A549 (cell line): ENCODE measurements at regions of chr15 and their contacts with region 1.

Region 1: GRCh38 chr15:88274553-88275460 is 18.3 kb upstream of the NTRK3 start:
- DNase-seq: peak; percentile 69 to 91
- ATAC-seq: peak; percentile 82 to 96
- H3K4me3 ChIP-seq: no peak overlapping the region
- H3K27ac ChIP-seq: peak overlapping the region; percentile 18 to 58; a peak in 4 of 6 replicates
- H3K4me1 ChIP-seq: peaks cover 10% of the 10 kb centered on the region; the same call in 2 of the 3 replicates
- CTCF ChIP-seq: peak; percentile 94
- EP300 ChIP-seq: no peak
- POLR2A ChIP-seq: no peak
- RAD21 ChIP-seq: peak; percentile 88 to 90

Region 2: DNA sequence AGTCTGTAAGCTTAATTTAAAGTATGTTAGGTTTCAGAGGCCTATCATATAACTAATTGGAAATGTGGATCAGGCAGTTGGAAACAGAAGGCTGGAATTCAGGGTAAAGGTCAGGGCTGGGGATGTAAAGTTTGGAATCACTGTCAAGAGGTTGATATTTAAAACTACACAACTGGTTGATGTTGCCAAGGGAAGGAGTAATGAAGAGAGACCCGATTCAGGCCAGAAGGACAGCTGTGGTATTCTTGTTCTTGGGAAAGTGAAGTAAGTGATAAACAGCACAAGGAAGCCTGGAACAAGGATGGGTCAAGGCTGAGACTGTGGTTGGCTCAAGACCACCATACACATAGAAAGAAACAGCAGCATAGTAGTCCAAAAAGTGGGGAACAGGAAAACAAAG is 672.4 kb before region 1 on chr15:
- CTCF ChIA-PET with region 1: no interaction called
- POLR2A ChIA-PET with region 1: no interaction called
- DNase-seq: no peak
- ATAC-seq: no peak
- H3K4me3 ChIP-seq: no peak overlapping the region
- H3K27ac ChIP-seq: no peak overlapping the region
- H3K4me1 ChIP-seq: no peaks in the 10 kb centered on the region
- CTCF ChIP-seq: no peak
- EP300 ChIP-seq: no peak
- POLR2A ChIP-seq: no peak
- RAD21 ChIP-seq: no peak

Region 3: GRCh38 chr15:87874896-87875711 is 399.7 kb before region 1 on chr15:
- CTCF ChIA-PET with region 1: no interaction called
- POLR2A ChIA-PET with region 1: no interaction called
- DNase-seq: no peak
- ATAC-seq: no peak
- H3K4me3 ChIP-seq: no peak overlapping the region
- H3K27ac ChIP-seq: peak overlapping the region in 1 of 2 experiments; percentile 8; a peak in 1 of 6 replicates
- H3K4me1 ChIP-seq: peaks cover 21% of the 10 kb centered on the region; the same call in 2 of the 3 replicates
- CTCF ChIP-seq: no peak
- EP300 ChIP-seq: no peak
- POLR2A ChIP-seq: no peak
- RAD21 ChIP-seq: no peak

Region 4: DNA sequence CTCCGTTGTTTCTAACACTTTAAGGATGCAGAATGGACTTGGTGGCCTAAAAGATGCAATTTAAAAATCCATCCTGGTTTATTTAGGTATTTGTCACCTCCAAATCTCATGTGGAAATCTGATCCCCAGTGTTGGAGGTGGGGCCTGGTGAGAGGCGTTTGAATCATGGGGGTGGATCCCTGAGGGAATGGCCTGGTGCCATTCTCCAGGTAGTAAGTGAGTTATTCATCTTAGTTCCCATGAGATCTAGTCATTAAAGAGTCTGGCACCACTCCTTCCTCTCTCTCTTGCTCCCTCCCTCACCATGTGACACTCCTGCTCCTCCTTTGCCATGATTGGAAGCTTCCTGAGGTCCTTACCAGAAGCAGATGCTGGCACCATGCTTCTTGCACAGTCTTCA is 357.3 kb before region 1 on chr15:
- CTCF ChIA-PET with region 1: no interaction called
- POLR2A ChIA-PET with region 1: no interaction called
- DNase-seq: no peak
- ATAC-seq: no peak
- H3K4me3 ChIP-seq: no peak overlapping the region
- H3K27ac ChIP-seq: no peak overlapping the region
- H3K4me1 ChIP-seq: no peaks in the 10 kb centered on the region
- CTCF ChIP-seq: no peak
- EP300 ChIP-seq: no peak
- POLR2A ChIP-seq: no peak
- RAD21 ChIP-seq: no peak

Region 5: GRCh38 chr15:88258093-88258641 is 16.6 kb before region 1 on chr15:
- CTCF ChIA-PET with region 1: interaction called, 121 read pairs
- POLR2A ChIA-PET with region 1: no interaction called
- DNase-seq: peak; percentile 75 to 79
- ATAC-seq: peak; percentile 9 to 51; a peak in 3 of 6 replicates
- H3K4me3 ChIP-seq: peak overlapping the region; percentile 81
- H3K27ac ChIP-seq: peak overlapping the region; percentile 87 to 92
- H3K4me1 ChIP-seq: peaks cover 33% of the 10 kb centered on the region
- CTCF ChIP-seq: peak; percentile 45
- EP300 ChIP-seq: no peak
- POLR2A ChIP-seq: no peak
- RAD21 ChIP-seq: peak in 1 of 2 experiments; percentile 50; a peak in 3 of 5 replicates

Region 6: DNA sequence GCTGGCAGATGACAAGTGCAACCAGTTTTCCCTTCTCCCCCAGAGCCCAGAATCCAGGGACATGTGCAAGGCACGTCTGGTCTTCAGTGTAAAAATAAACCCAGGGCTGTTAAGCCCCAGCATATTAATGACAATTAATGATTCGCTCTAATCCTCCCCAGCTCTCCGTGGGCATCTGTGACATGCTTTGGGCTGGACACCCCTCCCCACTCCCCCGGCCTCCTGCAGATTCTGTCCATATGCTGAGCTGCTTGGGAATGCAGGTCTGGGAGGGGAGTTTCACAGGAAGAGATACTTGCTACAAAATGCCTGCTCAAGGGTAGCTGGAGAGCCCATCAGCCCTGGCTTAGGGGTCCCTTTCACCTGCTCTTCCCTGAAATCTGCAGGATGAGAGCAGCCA is 24.7 kb after region 1 on chr15:
- CTCF ChIA-PET with region 1: interaction called, 22 read pairs
- POLR2A ChIA-PET with region 1: no interaction called
- DNase-seq: no peak
- ATAC-seq: no peak
- H3K4me3 ChIP-seq: no peak overlapping the region
- H3K27ac ChIP-seq: no peak overlapping the region
- H3K4me1 ChIP-seq: peaks cover 4% of the 10 kb centered on the region; the same call in 1 of the 3 replicates
- CTCF ChIP-seq: no peak
- EP300 ChIP-seq: no peak
- POLR2A ChIP-seq: no peak
- RAD21 ChIP-seq: no peak